ENCODE measurements at regions of chr4 and their contacts with region 1.

Region 1: GRCh38 chr4:184437565-184438265 is 36.6 kb downstream of the IRF2 start:
- DNase-seq: no peak
- ATAC-seq: no peak
- H3K4me3 ChIP-seq: no peak overlapping the region
- H3K27ac ChIP-seq: no peak overlapping the region
- H3K4me1 ChIP-seq: no peaks in the 10 kb centered on the region
- H3K27me3 ChIP-seq: no peaks in the 10 kb centered on the region
- CTCF ChIP-seq: no peak

Region 2: DNA sequence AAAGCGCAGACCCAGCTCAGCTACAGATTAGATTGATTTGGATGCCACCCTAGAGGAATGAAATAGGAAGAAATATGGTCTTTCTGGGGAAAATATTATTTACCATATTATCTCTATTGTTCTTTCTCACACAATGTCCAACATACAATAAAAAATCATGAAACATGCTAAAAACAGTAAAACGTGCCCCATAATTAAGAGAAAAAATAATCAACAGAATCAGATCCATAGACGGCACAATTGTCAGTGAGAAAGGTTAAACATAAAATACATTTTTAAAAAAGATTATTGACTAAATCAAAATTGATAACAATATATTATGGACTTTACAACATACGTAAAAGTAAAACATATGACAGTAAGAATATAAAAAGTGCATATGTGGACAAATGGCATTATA is 310.9 kb before region 1 on chr4:
- CTCF ChIA-PET with region 1: no interaction called
- POLR2A ChIA-PET with region 1: no interaction called
- intact Hi-C with region 1: no loop called
- DNase-seq: no peak
- ATAC-seq: no peak
- H3K4me3 ChIP-seq: no peak overlapping the region
- H3K27ac ChIP-seq: no peak overlapping the region
- H3K4me1 ChIP-seq: no peaks in the 10 kb centered on the region
- H3K27me3 ChIP-seq: peaks cover 36% of the 10 kb centered on the region
- CTCF ChIP-seq: no peak

Region 3: GRCh38 chr4:184298254-184298653 is 139.5 kb before region 1 on chr4:
- CTCF ChIA-PET with region 1: interaction called, 11 read pairs
- POLR2A ChIA-PET with region 1: no interaction called
- intact Hi-C with region 1: no loop called
- DNase-seq: no peak
- ATAC-seq: no peak
- H3K4me3 ChIP-seq: no peak overlapping the region
- H3K27ac ChIP-seq: no peak overlapping the region
- H3K4me1 ChIP-seq: no peaks in the 10 kb centered on the region
- H3K27me3 ChIP-seq: no peaks in the 10 kb centered on the region
- CTCF ChIP-seq: no peak

Region 4: DNA sequence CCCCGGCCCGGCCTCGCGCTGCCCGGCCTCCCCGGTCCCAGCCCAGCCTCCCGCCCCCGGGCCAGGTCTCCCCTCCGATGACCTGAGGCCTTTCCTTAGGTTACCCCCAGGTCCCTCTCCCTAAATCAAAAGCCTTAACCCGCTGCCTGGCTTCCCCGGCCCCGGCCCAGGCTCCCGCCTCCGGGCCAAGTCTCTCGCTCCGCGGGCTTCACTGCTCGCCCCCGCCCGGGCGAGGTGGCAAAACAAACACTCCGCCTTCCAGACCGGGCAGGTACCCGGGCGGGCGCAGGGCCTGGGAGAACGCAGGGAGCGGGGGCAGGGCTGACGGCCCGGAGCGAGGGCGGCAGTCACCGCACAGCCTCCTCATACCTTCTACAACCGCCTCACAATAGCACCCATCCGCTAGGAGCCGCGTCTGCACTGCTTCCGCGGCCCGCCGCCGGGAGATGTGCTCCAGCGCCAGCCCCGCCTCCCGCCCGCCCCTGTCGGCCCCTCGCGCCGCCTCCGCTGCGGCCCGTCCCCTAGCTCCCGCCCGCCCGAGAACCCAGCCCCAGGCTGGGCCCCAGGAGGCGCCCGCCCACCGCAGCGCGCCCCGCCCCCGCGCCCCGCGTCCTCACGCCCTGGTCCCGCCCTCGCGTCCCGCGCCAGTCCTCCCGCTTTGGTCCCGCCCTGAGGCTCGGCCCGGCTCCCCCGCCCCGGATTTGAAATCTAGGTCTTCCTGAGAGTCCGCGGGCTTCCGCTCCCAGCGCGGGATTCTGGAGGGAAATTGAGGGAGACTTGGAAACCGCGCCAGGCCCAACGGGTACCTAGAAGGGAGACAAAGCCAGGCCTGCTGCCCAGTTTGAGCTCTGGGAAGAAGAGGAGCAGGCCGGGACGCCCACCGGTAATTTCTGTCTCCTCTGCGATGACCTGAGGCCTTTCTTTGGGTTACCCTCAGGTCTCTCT is 211.6 kb after region 1 on chr4 and contains the starts of genes CASP3 and PRIMPOL:
- CTCF ChIA-PET with region 1: no interaction called
- POLR2A ChIA-PET with region 1: no interaction called
- intact Hi-C with region 1: no loop called
- DNase-seq: peak; percentile 89
- ATAC-seq: peak; percentile 82
- H3K4me3 ChIP-seq: peak within 1 kb of the TSS; percentile 93
- H3K27ac ChIP-seq: peak within 1 kb of the TSS; percentile 57
- H3K4me1 ChIP-seq: peaks cover 21% of the 10 kb centered on the region
- H3K27me3 ChIP-seq: no peaks in the 10 kb centered on the region
- CTCF ChIP-seq: 0 out of 2 replicates have a peak, but pooled peaks have one; percentile 7
- total RNA-seq, gene CASP3: 11.1 and 13.2 TPM in 2 replicates
- total RNA-seq, gene PRIMPOL: 9.3 and 9.4 TPM in 2 replicates